ENCODE measurements at regions of chr12 and their contacts with region 1.

Region 1: GRCh38 chr12:74365178-74365964 is 172.3 kb upstream of the ATXN7L3B start:
- DNase-seq: peak; percentile 21 to 51 (median 22)
- H3K4me3 ChIP-seq: no peak overlapping the region
- H3K27ac ChIP-seq: no peak overlapping the region
- H3K4me1 ChIP-seq: no peaks in the 10 kb centered on the region
- H3K27me3 ChIP-seq: no peaks in the 10 kb centered on the region
- CTCF ChIP-seq: peak in 1 of 3 donors; percentile 25
- EP300 ChIP-seq: no peak
- POLR2A ChIP-seq: no peak

Region 2: DNA sequence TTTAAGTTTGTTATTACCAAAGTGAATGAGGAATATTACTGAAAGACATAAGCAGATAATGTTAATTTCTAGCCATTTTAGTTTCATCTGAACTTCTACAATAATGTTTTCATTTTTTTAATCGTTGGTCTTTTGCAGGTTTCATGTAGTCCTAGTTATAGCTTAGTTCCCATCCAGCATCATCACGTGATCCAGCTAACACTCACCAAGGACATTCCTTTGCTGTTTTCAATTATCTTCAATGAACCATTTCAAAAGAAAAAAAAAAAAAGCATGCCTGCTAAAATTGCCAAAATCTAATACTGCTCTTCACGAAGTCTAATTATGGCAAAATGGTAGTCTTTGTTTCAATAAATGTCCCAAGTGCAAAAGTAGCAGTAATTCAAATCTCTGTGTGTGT is 15.4 kb before region 1 on chr12:
- intact Hi-C with region 1: loop called in 1 of 4 experiments (anchors 2 kb)
- DNase-seq: no peak
- H3K4me3 ChIP-seq: no peak overlapping the region
- H3K27ac ChIP-seq: no peak overlapping the region
- H3K4me1 ChIP-seq: no peaks in the 10 kb centered on the region
- H3K27me3 ChIP-seq: no peaks in the 10 kb centered on the region
- CTCF ChIP-seq: no peak
- EP300 ChIP-seq: no peak
- POLR2A ChIP-seq: no peak